Dorsolateral prefrontal cortex (tissue), 120 donors: ENCODE measurements at regions of chr2 and their contacts with region 1.

Region 1: DNA sequence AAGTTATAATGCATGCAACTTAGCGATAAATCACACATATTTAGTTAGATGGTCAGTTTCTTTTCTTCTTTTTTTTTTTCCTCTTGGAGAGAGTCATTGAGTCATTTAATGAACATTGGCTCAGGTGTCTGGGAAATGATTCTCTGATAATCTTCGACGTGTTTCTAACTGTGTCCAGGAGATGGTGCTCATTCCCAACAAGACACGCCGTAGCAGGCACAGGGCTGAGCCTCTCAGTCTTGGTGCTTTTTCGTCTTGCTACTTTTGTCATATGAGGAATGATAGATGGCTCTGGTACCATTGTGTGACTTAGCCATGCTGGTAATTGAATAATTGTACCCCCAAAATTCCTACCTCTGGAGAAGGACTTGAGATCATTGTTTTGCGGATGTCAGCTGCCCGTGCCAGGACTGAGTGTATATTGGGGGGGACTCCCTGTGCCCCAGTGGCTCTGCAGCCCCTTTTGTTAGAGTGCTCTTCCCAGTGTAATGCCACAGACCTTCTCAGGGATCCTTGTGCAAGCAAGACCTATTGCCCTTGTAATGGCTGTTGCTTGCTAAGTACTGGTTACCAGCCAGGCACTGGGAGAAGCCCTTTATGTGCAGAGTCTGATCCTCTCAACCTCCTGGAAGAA is 107.6 kb upstream of the CYRIA start:
- DNase-seq: peak in 7 of 10 donors; percentile 49 to 76 (median 61)
- H3K4me3 ChIP-seq: no peak overlapping the region
- H3K27ac ChIP-seq: peak overlapping the region in 3 of 59 donors; percentile 21 to 41 (median 33)
- H3K27me3 ChIP-seq: peaks cover 0 to 2% (median 0%) of the 10 kb centered on the region in 45 donors
- CTCF ChIP-seq: peak; percentile 36 to 90 (median 73)

Region 2: GRCh38 chr2:16861530-16862196 is 88.5 kb after region 1 on chr2:
- intact Hi-C with region 1: no loop called
- DNase-seq: no peak
- H3K4me3 ChIP-seq: no peak overlapping the region
- H3K27ac ChIP-seq: peak overlapping the region in 21 of 59 donors; percentile 4 to 77 (median 31)
- H3K27me3 ChIP-seq: no peaks in the 10 kb centered on the region
- CTCF ChIP-seq: no peak

Region 3: GRCh38 chr2:16890081-16890480 is 116.9 kb after region 1 on chr2:
- intact Hi-C with region 1: loop called (anchors 5 to 10 kb)
- DNase-seq: no peak
- H3K4me3 ChIP-seq: no peak overlapping the region
- H3K27ac ChIP-seq: no peak overlapping the region
- H3K27me3 ChIP-seq: no peaks in the 10 kb centered on the region
- CTCF ChIP-seq: peak in 19 of 56 donors; percentile 5 to 59 (median 20)

Region 4: GRCh38 chr2:17148407-17149145 is 375.4 kb after region 1 on chr2:
- intact Hi-C with region 1: loop called (anchors 10 kb)
- DNase-seq: peak in 3 of 10 donors; percentile 23 to 43 (median 42)
- H3K4me3 ChIP-seq: no peak overlapping the region
- H3K27ac ChIP-seq: no peak overlapping the region
- H3K27me3 ChIP-seq: no peaks in the 10 kb centered on the region
- CTCF ChIP-seq: peak in 32 of 56 donors; percentile 8 to 54 (median 30)

Region 5: GRCh38 chr2:17309741-17310339 is 536.6 kb after region 1 on chr2:
- intact Hi-C with region 1: loop called in 1 of 2 experiments (anchors 2 kb)
- DNase-seq: peak in 1 of 10 donors; percentile 41
- H3K4me3 ChIP-seq: no peak overlapping the region
- H3K27ac ChIP-seq: peak overlapping the region in 11 of 59 donors; percentile 1 to 67 (median 23)
- H3K27me3 ChIP-seq: no peaks in the 10 kb centered on the region
- CTCF ChIP-seq: peak in 54 of 56 donors; percentile 48 to 83 (median 66)

Region 6: DNA sequence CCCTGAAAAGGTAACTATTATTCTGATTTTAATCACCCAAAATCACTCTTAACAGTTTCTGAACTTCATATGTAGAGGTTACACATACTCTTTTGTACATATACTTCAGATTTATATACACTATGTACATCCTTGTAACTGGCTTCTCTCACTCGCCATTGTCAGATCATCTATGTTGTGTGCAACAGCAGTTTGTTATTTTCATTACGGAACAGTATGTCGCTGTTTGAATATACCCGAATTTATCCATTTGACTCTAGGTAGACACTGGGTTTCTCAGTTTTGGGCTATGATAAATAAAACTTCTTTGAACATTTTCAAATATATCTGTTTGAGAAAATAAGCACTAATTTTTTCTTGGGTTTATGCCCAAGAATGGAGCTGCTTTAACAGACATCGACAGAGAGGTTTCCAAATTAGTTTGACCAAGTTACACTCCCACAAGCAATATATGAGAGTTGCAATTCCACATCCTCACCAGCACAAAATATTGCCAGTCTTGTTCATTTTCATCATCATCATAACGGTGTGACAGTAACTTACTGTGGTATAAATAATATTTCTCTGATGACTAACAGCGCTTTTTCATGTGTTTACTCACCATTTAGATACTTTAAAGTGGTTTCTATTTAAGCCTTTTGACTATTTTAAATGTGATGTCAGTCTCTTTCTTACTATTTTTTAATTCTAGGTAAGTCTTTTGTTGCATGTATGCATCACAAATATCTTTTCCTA is 899.6 kb after region 1 on chr2:
- intact Hi-C with region 1: loop called (anchors 5 to 10 kb)
- DNase-seq: no peak
- H3K4me3 ChIP-seq: no peak overlapping the region
- H3K27ac ChIP-seq: no peak overlapping the region
- H3K27me3 ChIP-seq: no peaks in the 10 kb centered on the region
- CTCF ChIP-seq: peak in 5 of 56 donors; percentile 11 to 26 (median 14)